AG04450 (cell line): ENCODE measurements at regions of chr5 and their contacts with region 1.

Region 1: GRCh38 chr5:54215233-54215736 is 95.1 kb downstream of the ARL15 start:
- DNase-seq: no peak
- H3K4me3 ChIP-seq: no peak overlapping the region
- H3K27ac ChIP-seq: no peak overlapping the region
- H3K27me3 ChIP-seq: no peaks in the 10 kb centered on the region
- CTCF ChIP-seq: no peak

Region 2: GRCh38 chr5:53965459-53965858 is 249.8 kb before region 1 on chr5:
- CTCF ChIA-PET with region 1: interaction called, 10 read pairs
- POLR2A ChIA-PET with region 1: no interaction called
- DNase-seq: no peak
- H3K4me3 ChIP-seq: no peak overlapping the region
- H3K27ac ChIP-seq: no peak overlapping the region
- H3K27me3 ChIP-seq: no peaks in the 10 kb centered on the region
- CTCF ChIP-seq: no peak